ENCODE measurements at regions of chr12 and their contacts with region 1.

Region 1: DNA sequence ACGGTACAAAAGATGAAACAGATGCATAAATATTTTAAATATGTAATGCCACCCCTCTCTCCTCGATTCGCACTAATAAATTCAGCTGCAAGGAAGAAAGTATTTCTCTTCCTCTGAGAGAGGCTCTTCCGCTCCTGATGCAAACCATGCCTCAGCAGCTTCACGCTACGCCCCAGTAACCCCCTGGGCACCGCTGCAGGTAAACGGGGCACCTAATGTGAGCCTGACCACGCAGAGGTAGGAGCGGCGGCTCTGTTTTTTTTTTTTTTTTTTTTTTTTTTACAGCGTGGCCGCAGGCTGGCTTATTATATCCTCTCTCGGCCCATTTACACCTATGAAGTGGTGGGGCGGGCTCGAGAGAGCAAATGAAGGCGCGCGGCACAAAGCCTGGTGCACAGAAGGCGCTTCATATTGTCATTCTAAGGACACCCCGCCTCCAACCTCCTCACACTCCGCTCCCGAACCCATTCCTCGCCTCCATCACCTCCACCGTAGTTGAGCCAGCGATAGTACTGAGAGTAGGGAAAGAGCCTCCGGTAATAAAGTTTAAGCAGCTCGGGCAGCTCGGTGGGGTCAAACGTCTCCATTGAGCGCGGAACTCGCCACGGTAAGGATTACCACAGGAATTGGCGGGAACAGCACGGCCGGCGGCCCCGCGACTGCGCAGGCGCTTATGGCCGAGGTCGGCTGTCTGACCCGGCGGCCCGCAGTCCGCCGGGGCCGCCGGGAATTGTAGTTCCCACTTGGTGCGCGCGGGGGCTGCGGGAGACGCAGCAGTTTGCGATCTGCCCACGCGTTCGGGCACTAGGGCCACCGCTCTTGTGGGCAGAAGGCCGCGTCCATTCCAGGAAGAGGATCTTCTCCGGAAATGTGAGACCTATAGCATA is at the start of gene PRIM1:
- DNase-seq: peak; percentile 90
- ATAC-seq: peak; percentile 84
- H3K4me3 ChIP-seq: peak within 1 kb of the TSS; percentile 69
- H3K27ac ChIP-seq: peak within 1 kb of the TSS; percentile 47
- H3K4me1 ChIP-seq: peaks cover 7% of the 10 kb centered on the region
- H3K27me3 ChIP-seq: no peaks in the 10 kb centered on the region
- CTCF ChIP-seq: no peak
- total RNA-seq, gene PRIM1: 25.0 and 32.3 TPM in 2 replicates

Region 2: DNA sequence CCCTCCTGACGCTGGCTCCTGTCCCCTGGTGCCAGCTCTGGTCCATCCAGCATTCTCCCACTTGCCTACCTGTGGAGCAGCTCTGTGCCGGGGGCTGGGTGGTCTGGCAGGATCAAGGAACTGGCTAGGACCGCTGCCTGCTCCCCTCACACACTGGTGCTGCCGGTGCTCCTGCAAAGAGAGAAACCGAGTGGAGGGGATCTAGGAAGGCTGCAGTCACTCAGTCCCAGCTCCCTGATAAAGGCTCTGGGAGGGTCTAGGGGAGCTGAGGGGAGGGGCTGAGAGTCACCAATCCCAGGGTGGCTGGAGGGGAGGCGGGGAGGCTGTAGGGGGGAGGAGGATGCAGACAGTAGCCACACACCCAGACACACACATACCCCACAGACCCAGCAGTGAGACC is 264.4 kb after region 1 on chr12 and contains the start of gene TAC3:
- CTCF ChIA-PET with region 1: interaction called, 11 read pairs
- POLR2A ChIA-PET with region 1: no interaction called
- intact Hi-C with region 1: no loop called
- DNase-seq: no peak
- ATAC-seq: no peak
- H3K4me3 ChIP-seq: no peak within 1 kb of the TSS
- H3K27ac ChIP-seq: no peak within 1 kb of the TSS
- H3K4me1 ChIP-seq: peaks cover 7% of the 10 kb centered on the region
- H3K27me3 ChIP-seq: peaks cover 35% of the 10 kb centered on the region
- CTCF ChIP-seq: no peak
- total RNA-seq, gene TAC3: not detected in 2 replicates

Region 3: GRCh38 chr12:57063991-57064685 is 312.2 kb after region 1 on chr12:
- CTCF ChIA-PET with region 1: no interaction called
- POLR2A ChIA-PET with region 1: no interaction called
- intact Hi-C with region 1: loop called (anchors 2 kb)
- DNase-seq: no peak
- ATAC-seq: no peak
- H3K4me3 ChIP-seq: no peak overlapping the region
- H3K27ac ChIP-seq: no peak overlapping the region
- H3K4me1 ChIP-seq: no peaks in the 10 kb centered on the region
- H3K27me3 ChIP-seq: no peaks in the 10 kb centered on the region
- CTCF ChIP-seq: no peak